ENCODE measurements at regions of chr14 and their contacts with region 1.

Region 1: DNA sequence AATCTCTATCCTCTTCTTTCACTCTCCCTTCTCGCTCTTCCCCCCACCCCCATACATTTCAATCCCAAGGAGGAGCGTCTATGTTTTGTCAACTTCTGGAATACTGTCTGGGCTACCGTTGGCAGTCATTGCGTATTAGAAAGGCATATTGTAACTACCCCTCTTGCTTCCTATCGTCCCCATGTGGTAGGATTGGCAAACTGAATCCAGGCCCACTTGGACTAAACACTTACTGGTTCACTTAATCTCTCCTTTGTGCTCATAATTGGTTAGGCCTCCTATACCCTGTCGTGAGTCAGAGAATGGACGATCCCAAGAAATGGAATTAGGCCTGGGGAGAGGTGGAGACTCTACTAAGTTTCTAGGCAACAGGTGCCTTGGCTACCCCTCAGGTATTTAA is 68.8 kb upstream of the SLC8A3 start:
- DNase-seq: no peak
- H3K4me3 Mint-ChIP-seq: no peak overlapping the region
- H3K27ac Mint-ChIP-seq: no peak overlapping the region
- H3K4me1 Mint-ChIP-seq: no peaks in the 10 kb centered on the region
- H3K27me3 Mint-ChIP-seq: peaks cover 44% of the 10 kb centered on the region

Region 2: GRCh38 chr14:69980457-69981425 is 276.8 kb before region 1 on chr14:
- intact Hi-C with region 1: no loop called
- DNase-seq: no peak
- H3K4me3 Mint-ChIP-seq: no peak overlapping the region
- H3K27ac Mint-ChIP-seq: no peak overlapping the region
- H3K4me1 Mint-ChIP-seq: no peaks in the 10 kb centered on the region
- H3K27me3 Mint-ChIP-seq: peaks cover 25% of the 10 kb centered on the region

Region 3: GRCh38 chr14:70188659-70189455 is 68.7 kb before region 1 on chr14 and contains the start of gene SLC8A3:
- intact Hi-C with region 1: loop called (anchors 5 kb)
- DNase-seq: no peak
- H3K4me3 Mint-ChIP-seq: peak within 1 kb of the TSS; percentile 80
- H3K27ac Mint-ChIP-seq: no peak within 1 kb of the TSS
- H3K4me1 Mint-ChIP-seq: peaks cover 6% of the 10 kb centered on the region
- H3K27me3 Mint-ChIP-seq: peaks cover 49% of the 10 kb centered on the region
- total RNA-seq, gene SLC8A3: 0.21 and 0.24 TPM in 2 replicates

Measured in activated T-helper 1 cell treated with anti-CD3 and anti-CD28 coated beads, Interleukin-12 subunit alpha, Interleukin-12 subunit beta, Interleukin-2, Interleukin-4 antibody, amounts not matched to agents 30 ng/mL and 10 ng/mL and 1 ng/mL, durations not matched to agents 14 hours and 24 hours and 36 hours (primary cell).